ENCODE measurements at regions of chr3 and their contacts with region 1.

Region 1: GRCh38 chr3:25594007-25594502 is 70.7 kb downstream of the TOP2B start:
- DNase-seq: no peak
- ATAC-seq: peak; percentile 33 to 71 (median 46)
- H3K4me3 ChIP-seq: no peak overlapping the region
- H3K27ac ChIP-seq: peak overlapping the region; percentile 60
- H3K4me1 ChIP-seq: peaks cover 17% of the 10 kb centered on the region
- H3K27me3 ChIP-seq: no peaks in the 10 kb centered on the region
- CTCF ChIP-seq: peak; percentile 86

Region 2: DNA sequence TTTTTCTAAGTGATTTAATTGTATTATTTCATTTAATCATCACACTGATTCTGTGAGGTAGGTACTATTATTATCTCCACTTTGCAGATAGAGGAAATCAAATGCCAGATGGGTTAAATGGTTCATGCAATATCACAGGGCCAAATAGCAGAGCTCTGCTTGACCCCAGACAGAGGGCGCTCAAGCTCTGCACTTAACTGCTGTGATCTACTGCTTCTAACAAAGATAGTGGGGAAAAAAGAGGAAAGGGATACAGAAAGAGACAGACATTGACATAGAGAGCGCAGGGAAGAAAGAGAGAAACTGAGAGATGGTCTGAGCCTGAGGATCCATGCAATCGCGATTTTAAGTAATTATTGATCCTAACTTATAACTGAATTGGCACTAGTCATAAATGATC is 820.3 kb before region 1 on chr3:
- intact Hi-C with region 1: loop called (anchors 5 kb)
- DNase-seq: peak; percentile 22 to 63
- ATAC-seq: peak; percentile 48 to 80 (median 66)
- H3K4me3 ChIP-seq: no peak overlapping the region
- H3K27ac ChIP-seq: no peak overlapping the region
- H3K4me1 ChIP-seq: no peaks in the 10 kb centered on the region
- H3K27me3 ChIP-seq: no peaks in the 10 kb centered on the region
- CTCF ChIP-seq: peak; percentile 75

Region 3: DNA sequence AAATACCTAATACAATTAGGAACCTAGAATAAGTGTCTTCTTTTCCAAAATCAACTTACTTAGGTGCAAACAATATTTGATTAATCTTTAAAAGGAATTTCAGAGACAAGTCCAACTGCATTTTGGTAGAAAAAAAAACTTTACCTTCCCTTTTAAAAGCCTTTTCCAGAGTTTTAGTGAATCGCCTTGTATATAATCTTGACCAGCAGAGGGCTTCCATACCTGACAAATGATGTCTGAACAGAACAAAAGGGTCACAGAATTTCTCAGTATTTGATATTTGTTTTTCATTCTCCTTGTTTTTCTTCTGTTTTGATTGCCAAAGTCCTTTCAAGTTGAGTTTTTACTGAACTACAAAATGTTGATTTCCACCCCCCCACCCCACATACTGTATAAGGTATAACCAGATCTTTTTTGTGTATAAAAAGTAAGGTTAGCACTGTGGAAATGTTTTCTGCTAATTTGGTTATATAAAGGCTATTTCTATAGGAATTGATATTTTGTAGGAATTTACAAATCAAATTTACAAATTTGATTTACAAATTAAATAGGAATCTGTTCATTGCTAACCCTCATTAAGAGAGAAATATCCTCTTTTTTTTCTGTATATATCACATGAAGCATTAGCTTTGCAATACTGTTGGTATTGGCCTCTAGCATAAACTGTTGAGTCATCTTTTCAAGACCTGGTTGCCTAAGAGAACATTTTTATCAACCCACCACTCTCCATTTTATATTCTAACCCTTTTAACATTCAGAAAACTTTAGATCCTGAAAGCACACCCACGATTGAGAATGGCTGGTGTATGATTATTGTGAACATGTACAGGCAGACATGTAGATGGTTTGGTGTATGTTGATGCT is 630.1 kb before region 1 on chr3:
- intact Hi-C with region 1: loop called (anchors 5 kb)
- DNase-seq: no peak
- ATAC-seq: no peak
- H3K4me3 ChIP-seq: no peak overlapping the region
- H3K27ac ChIP-seq: no peak overlapping the region
- H3K4me1 ChIP-seq: no peaks in the 10 kb centered on the region
- H3K27me3 ChIP-seq: no peaks in the 10 kb centered on the region
- CTCF ChIP-seq: peak; percentile 51

Region 4: GRCh38 chr3:25021816-25022215 is 572.2 kb before region 1 on chr3:
- intact Hi-C with region 1: loop called in 1 of 2 experiments (anchors 5 kb)
- DNase-seq: no peak
- ATAC-seq: peak in 1 of 4 donors; percentile 51
- H3K4me3 ChIP-seq: no peak overlapping the region
- H3K27ac ChIP-seq: no peak overlapping the region
- H3K4me1 ChIP-seq: no peaks in the 10 kb centered on the region
- H3K27me3 ChIP-seq: no peaks in the 10 kb centered on the region
- CTCF ChIP-seq: peak; percentile 53

Region 5: GRCh38 chr3:25297667-25298585 is 296.1 kb before region 1 on chr3:
- intact Hi-C with region 1: loop called in 1 of 2 experiments (anchors 10 kb)
- DNase-seq: no peak
- ATAC-seq: peak in 1 of 4 donors; percentile 27
- H3K4me3 ChIP-seq: no peak overlapping the region
- H3K27ac ChIP-seq: no peak overlapping the region
- H3K4me1 ChIP-seq: no peaks in the 10 kb centered on the region
- H3K27me3 ChIP-seq: no peaks in the 10 kb centered on the region
- CTCF ChIP-seq: no peak

Region 6: GRCh38 chr3:25427942-25428788 is 165.9 kb before region 1 on chr3 and contains the start of gene RARB:
- intact Hi-C with region 1: loop called in 1 of 2 experiments (anchors 5 kb)
- DNase-seq: peak; percentile 53 to 67
- ATAC-seq: peak; percentile 86 to 92 (median 90)
- H3K4me3 ChIP-seq: peak within 1 kb of the TSS; percentile 73
- H3K27ac ChIP-seq: peak within 1 kb of the TSS; percentile 86
- H3K4me1 ChIP-seq: peaks cover 20% of the 10 kb centered on the region
- H3K27me3 ChIP-seq: no peaks in the 10 kb centered on the region
- CTCF ChIP-seq: no peak
- total RNA-seq, gene RARB: 1.3 to 5.4 (median 1.9) TPM

Region 7: DNA sequence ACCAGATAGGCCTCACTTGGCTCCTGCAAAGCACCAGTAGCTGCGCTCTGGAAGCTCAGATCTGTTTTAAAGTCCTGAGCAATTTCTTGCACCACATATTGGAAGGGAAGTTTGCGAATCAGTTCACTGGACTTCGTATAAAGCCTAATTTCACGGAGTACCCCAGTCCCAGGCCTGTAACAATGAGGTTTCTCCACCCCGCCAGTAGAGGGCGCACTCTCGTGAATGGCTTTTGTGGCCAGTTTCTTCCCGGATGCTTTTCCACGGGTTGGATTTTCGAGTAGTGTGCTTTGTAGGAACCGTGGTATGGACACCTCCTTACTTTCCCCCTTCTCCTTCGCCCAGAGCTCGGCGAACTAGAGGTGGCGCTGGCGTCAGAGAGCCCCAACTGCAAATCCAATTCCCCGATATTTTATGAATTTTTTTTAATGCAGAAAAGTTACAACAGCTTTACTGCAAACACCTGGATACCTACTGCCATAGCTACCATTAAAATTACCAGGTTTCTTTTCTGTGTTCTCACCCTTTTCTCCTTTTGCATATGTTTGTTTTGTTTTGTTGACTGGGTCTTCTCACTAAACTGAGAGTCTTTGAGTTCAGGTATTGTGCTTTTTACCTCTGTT is 152.7 kb before region 1 on chr3:
- intact Hi-C with region 1: loop called (anchors 5 kb)
- DNase-seq: peak; percentile 19 to 61
- ATAC-seq: peak in 2 of 4 donors; percentile 56 to 59
- H3K4me3 ChIP-seq: no peak overlapping the region
- H3K27ac ChIP-seq: no peak overlapping the region
- H3K4me1 ChIP-seq: no peaks in the 10 kb centered on the region
- H3K27me3 ChIP-seq: no peaks in the 10 kb centered on the region
- CTCF ChIP-seq: peak; percentile 48

Measured in psoas muscle (tissue), 8 donors.